ENCODE measurements at regions of chr9 and their contacts with region 1.

Region 1: DNA sequence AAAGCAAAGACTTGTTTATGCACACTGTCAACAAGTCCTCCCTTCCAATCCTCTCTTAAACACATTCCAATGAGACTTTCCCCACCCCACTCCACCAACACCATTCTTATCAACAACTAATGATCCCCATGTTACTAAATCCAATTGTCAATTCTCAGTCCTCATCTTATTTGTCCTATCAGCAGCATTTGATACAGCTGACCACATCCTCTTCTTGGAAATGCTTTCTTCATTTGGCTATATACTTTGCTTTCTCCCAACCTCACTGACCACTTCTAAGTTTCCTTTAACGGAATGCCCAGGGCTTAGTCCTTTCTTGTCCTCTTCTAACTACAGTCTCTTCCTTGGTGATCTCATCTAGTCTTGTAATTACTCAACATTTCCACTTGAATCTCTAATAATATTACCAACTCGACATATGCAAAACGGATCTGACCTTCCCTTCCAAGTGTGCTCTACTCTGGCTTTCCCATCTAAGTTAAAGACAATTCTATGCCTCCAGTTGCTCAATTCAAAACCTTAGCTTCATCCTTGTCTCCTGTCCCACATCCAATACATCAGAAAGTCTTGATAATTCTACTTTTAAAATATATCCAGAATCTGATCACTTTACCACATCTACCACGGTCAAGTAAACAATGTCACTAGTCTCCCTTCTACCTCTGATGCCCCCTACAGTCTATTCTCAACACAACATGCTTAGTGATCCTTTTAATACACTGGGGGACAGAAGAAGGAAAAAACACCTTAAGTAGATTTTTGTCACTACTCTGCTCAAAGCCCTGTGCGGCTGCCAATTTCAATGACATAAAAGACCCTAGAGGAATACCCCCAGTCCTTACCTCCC is 25.5 kb downstream of the AGTPBP1 start:
- DNase-seq: no peak
- H3K4me3 ChIP-seq: no peak overlapping the region
- H3K27ac ChIP-seq: no peak overlapping the region
- H3K4me1 ChIP-seq: no peaks in the 10 kb centered on the region
- H3K27me3 ChIP-seq: no peaks in the 10 kb centered on the region
- CTCF ChIP-seq: no peak
- POLR2A ChIP-seq: no peak

Region 2: DNA sequence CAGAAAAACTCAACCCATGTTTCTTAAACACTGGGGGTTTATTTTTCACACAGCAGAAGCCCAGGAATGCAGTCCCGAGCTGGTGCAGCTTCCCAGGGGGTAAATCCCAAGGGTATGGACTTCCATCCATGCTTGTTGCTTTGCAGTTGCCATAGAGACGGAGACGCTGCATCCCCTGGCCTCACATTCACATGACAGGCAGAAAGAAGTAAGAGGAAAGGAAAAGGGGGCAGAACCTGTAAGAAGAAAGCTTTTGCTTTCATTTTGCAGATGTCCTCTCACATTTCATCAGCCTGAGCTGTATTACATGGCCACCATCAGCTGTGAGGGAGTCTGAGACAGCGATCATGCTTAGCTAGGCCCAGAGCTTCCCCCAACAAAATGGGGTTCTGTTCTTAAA is 295.5 kb before region 1 on chr9:
- intact Hi-C with region 1: no loop called
- DNase-seq: no peak
- H3K4me3 ChIP-seq: no peak overlapping the region
- H3K27ac ChIP-seq: no peak overlapping the region
- H3K4me1 ChIP-seq: no peaks in the 10 kb centered on the region
- H3K27me3 ChIP-seq: no peaks in the 10 kb centered on the region
- CTCF ChIP-seq: no peak
- POLR2A ChIP-seq: no peak

Region 3: DNA sequence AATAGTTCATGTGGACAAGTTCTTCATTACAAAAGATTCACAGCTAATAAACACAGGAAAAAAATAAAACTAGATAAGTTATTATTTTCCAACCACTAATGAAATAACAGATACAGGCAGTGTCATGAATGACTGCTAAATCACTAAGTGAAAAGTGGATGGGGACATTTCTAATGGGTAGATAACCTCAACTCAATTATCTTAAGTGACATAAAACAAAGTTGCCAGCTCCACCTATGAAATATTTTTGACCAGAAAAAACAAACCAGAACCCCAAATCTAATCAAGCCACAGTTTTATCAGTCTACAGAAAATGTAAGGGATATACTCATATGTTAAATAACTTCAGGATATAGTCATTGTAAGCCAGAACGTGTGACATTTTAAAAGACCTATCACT is 48.9 kb before region 1 on chr9:
- intact Hi-C with region 1: no loop called
- DNase-seq: no peak
- H3K4me3 ChIP-seq: no peak overlapping the region
- H3K27ac ChIP-seq: no peak overlapping the region
- H3K4me1 ChIP-seq: no peaks in the 10 kb centered on the region
- H3K27me3 ChIP-seq: no peaks in the 10 kb centered on the region
- CTCF ChIP-seq: no peak
- POLR2A ChIP-seq: no peak

Region 4: DNA sequence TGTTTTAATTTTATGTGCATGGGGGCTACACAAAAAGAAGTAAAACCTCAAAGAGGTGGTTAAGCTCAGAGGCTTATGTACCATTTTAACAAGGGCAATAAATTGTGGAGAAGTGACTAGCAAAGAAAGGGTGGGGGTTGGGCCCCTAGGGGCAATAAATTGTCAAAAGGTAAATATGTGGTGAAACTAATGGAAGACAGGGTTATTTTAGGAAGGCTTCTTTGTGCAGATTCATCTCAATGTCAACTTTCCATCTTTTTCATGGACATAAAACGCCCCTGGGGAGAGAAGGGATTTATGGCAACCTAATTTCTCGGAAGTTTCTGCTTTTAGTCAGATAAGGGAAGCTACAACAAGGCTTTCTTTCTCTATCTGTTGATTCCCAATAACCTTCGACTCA is 425.6 kb after region 1 on chr9:
- intact Hi-C with region 1: loop called (anchors 10 kb)
- DNase-seq: no peak
- H3K4me3 ChIP-seq: no peak overlapping the region
- H3K27ac ChIP-seq: no peak overlapping the region
- H3K4me1 ChIP-seq: no peaks in the 10 kb centered on the region
- H3K27me3 ChIP-seq: no peaks in the 10 kb centered on the region
- CTCF ChIP-seq: no peak
- POLR2A ChIP-seq: no peak

Measured in breast epithelium (tissue), 4 donors.